Aorta (tissue), 5 donors: ENCODE measurements at regions of chr10 and their contacts with region 1.

Region 1: GRCh38 chr10:14536241-14537213 is 205.8 kb upstream of the FRMD4A start:
- DNase-seq: peak; percentile 80 to 82
- ATAC-seq: peak; percentile 64
- H3K4me3 ChIP-seq: no peak overlapping the region
- H3K27ac ChIP-seq: peak overlapping the region in 1 of 2 donors; percentile 76
- H3K4me1 ChIP-seq: no peaks in the 10 kb centered on the region
- H3K27me3 ChIP-seq: no peaks in the 10 kb centered on the region

Region 2: DNA sequence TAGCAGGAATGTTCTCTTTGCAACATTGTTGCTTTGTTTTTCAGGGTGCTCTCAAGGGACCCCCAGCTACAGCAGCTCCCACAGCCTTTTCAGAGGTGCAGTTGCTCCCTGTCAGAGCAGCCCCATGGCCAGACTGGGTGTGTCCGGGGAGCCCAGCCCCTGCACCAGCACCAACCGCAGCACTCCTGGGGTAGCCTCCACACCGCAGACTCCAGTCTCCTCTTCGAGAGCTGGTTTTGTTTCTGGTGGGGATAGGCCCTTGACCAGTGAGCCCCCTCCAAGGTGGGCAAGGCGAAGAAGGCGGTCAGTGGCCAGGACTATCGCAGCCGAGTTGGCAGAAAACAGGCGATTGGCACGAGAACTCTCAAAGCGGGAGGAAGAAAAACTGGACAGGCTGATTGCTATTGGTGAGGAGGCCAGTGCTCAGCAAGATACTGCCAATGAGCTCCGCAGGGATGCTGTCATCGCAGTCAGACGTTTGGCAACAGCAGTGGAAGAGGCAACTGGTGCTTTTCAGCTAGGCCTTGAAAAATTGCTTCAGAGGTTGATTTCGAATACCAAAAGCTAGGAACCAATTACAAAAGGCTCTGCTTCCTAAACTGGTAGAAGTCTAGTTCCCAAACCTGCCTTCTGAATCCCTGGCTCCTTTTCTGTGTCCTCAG is 306.9 kb after region 1 on chr10:
- intact Hi-C with region 1: loop called in 1 of 2 experiments (anchors 5 kb)
- DNase-seq: peak in 1 of 2 donors; percentile 41
- ATAC-seq: no peak
- H3K4me3 ChIP-seq: no peak overlapping the region
- H3K27ac ChIP-seq: no peak overlapping the region
- H3K4me1 ChIP-seq: no peaks in the 10 kb centered on the region
- H3K27me3 ChIP-seq: no peaks in the 10 kb centered on the region